Colonic mucosa (tissue), 4 donors: ENCODE measurements at regions of chr11 and their contacts with region 1.

Region 1: DNA sequence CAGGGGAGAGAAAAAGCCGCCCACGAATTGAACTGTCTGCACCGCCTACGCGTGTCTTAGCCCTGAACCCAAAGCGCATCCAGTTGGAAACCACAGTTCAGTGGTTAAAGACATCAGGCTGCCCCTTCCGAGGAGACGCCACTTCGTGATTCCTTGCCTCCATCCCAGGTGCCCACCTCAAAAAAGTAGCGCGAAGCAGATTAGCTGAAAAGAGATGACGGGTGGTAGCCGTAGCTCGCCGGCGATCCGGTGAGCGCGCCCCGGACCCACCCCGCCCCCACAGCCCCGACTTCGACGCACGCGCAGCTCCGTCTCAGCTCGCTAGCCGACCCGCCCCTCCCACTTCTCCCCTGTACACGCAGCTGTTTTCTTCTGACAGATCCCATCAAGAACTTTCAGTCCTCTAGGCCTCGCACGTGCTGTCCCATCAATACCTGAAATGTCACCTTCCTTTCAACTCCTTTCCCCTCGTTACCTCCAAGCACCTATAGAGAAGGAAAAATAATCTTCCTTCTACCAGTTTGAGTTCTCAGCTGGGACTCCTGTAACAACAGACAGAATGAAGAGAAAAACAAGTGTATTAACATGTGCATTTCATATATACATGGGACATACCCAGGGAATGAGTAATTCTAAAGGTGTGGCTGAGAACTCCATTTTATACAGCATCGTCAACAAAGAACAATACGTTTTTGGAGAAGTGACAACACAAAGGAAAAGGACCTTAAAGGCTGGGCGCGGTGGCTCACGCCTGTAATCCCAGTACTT is 49.5 kb downstream of the OR4D9 start:
- DNase-seq: peak; percentile 89
- H3K4me3 ChIP-seq: peak overlapping the region; percentile 65
- H3K27ac ChIP-seq: peak overlapping the region; percentile 84
- H3K4me1 ChIP-seq: no peaks in the 10 kb centered on the region
- H3K27me3 ChIP-seq: no peaks in the 10 kb centered on the region
- CTCF ChIP-seq: no peak

Region 2: DNA sequence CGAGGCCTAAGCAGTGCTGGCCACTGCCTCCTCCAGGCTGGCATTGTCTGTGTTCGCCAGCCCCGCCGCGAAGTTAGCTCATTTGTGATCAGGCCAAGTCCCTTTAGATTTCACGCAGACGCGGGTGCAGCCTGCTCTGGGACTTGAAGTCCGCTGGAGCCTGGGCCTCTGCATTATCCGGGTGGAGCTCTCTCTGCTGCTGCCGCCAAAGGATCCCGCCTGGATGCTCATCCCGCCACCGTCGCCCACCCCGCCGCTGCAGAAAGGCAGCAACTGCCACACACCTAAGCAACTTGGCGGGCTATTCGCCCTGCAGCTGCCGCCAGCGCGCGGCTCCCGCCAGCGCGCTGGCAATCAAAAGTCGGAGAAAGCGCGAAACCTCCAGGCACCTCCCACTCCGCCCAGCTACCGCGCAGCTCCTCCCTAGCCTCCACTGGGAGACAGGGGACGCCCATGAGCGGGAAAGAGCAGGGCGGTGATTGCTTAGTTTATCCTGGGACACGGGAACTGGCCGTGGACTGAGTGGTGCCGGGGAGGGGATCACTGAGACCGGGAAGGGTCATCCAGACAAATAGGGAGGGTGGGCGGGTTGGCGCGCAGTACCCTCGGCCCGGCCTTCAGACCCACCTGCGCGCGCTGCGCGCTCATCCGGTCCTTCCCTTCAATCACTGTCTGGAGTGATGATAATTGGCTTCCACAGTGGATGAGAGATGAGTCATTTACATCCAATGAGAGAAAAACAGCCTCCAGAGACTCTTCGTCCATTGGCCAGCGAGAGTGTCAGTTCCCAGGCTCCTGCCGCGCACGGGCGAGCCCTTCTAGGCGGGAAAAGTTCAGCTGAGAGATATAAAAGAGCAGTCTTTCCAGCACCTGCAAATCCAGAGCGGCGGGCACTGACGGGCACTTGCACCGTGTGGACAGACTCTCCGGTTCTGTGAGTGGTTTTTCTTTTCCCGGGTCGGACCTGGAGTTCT is 454.2 kb before region 1 on chr11 and contains the start of gene FAM111B:
- intact Hi-C with region 1: no loop called
- DNase-seq: peak; percentile 93
- H3K4me3 ChIP-seq: peak within 1 kb of the TSS; percentile 62
- H3K27ac ChIP-seq: peak within 1 kb of the TSS; percentile 47
- H3K4me1 ChIP-seq: peaks cover 5% of the 10 kb centered on the region
- H3K27me3 ChIP-seq: no peaks in the 10 kb centered on the region
- CTCF ChIP-seq: no peak
- total RNA-seq, gene FAM111B: 7.9 to 27.5 TPM

Region 3: GRCh38 chr11:59413646-59414045 is 147.2 kb before region 1 on chr11:
- intact Hi-C with region 1: no loop called
- DNase-seq: no peak
- H3K4me3 ChIP-seq: no peak overlapping the region
- H3K27ac ChIP-seq: no peak overlapping the region
- H3K4me1 ChIP-seq: no peaks in the 10 kb centered on the region
- H3K27me3 ChIP-seq: no peaks in the 10 kb centered on the region
- CTCF ChIP-seq: no peak

Region 4: GRCh38 chr11:59615637-59616395 is 54.9 kb after region 1 on chr11 and contains the start of gene OSBP:
- intact Hi-C with region 1: loop called (anchors 10 kb)
- DNase-seq: peak; percentile 100
- H3K4me3 ChIP-seq: peak within 1 kb of the TSS; percentile 81
- H3K27ac ChIP-seq: peak within 1 kb of the TSS; percentile 86
- H3K4me1 ChIP-seq: peaks cover 24% of the 10 kb centered on the region
- H3K27me3 ChIP-seq: no peaks in the 10 kb centered on the region
- CTCF ChIP-seq: no peak
- total RNA-seq, gene OSBP: 57.1 to 64.7 TPM